ENCODE measurements at regions of chr6 and their contacts with region 1.

Region 1: GRCh38 chr6:28683944-28684538 is 158.4 kb downstream of the GPX5 start:
- DNase-seq: peak; percentile 62 to 81 (median 66)
- ATAC-seq: peak; percentile 86
- H3K4me3 ChIP-seq: no peak overlapping the region
- H3K27ac ChIP-seq: no peak overlapping the region
- H3K4me1 ChIP-seq: peaks cover 0 to 44% of the 10 kb centered on the region in 2 experiments
- H3K27me3 ChIP-seq: no peaks in the 10 kb centered on the region
- CTCF ChIP-seq: peak; percentile 73 to 86 (median 81)
- EP300 ChIP-seq: no peak
- POLR2A ChIP-seq: no peak
- RAD21 ChIP-seq: peak; percentile 96 to 97

Region 2: DNA sequence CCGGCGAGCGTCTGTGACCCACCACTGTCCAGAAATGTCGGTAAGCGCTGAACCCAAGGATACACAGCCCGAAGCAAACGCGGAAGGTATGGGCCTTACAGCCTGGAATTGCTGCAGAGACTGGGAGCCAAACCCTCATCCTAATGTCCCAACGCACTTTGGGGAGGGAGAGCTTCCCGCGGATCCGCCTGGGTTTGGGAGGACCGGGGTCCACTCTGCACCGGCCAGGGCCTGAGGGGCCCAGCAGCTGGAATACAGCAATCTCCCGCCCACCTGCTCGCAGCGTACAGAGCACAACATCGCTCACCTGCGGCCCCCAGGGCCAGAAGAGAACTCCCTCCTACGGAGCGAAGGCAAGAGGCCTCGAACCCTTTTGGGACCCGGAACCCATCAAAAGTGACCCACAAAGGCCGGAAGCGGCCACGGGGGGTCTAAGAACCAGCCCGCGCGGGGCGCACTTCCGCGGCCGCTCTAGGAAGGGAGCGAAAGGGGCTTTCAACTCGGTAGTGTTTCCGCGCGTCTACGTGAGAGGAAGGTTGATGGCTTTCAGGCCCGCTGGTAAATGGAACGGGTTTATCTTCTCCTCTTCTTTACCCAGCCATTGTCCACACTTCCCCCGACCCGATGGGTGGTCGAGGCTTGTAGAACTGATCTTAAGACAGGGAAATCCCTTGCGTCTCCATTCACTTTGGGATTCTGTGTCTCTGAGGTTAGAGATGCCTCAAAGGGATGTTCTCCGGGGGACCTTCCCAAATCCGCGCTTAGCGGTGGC is 284.5 kb before region 1 on chr6 and contains the start of gene ZSCAN12:
- CTCF ChIA-PET with region 1: no interaction called
- POLR2A ChIA-PET with region 1: no interaction called
- in situ Hi-C with region 1: no loop called
- intact Hi-C with region 1: loop called (anchors 2 kb)
- DNase-seq: peak; percentile 90 to 99 (median 91)
- ATAC-seq: peak; percentile 88
- H3K4me3 ChIP-seq: peak within 1 kb of the TSS; percentile 61
- H3K27ac ChIP-seq: peak within 1 kb of the TSS; percentile 80
- H3K4me1 ChIP-seq: peaks cover 21 to 36% of the 10 kb centered on the region in 2 experiments
- H3K27me3 ChIP-seq: no peaks in the 10 kb centered on the region
- CTCF ChIP-seq: peak; percentile 74 to 82 (median 79)
- EP300 ChIP-seq: peak; percentile 74
- POLR2A ChIP-seq: peak; percentile 97
- RAD21 ChIP-seq: peak; percentile 37 to 47
- polyA plus RNA-seq, gene ZSCAN12: 2.5 to 7.9 TPM

Region 3: DNA sequence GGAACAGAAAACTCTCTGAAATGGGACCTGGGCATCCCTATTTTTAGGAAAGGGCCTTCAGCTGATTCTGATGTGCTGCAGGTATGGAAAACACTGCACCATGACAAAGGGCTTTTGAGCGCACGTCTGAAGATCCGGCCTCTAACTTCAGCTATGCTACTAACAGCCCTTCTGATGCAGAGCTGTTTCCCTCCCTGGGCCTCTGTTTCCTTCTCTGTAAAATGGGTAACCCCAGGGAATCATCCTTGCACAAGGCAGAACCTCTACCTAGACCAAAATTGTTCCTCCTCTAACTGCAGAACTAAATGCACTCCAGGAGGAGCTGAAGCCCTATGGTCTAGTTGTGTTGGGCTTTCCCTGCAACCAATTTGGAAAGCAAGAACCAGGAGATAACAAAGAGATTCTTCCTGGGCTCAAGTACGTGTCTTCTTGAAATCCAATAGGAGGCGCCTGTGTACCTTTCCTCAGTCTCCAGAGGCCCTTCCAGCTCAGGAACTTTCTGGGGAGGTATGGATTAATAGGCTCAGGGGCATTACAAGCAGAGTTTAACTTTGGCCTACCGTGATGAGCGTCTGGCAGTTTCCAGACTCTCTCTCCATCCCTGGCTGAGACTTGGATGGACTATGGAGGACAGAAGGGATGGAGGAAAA is 152.4 kb before region 1 on chr6:
- CTCF ChIA-PET with region 1: no interaction called
- POLR2A ChIA-PET with region 1: no interaction called
- in situ Hi-C with region 1: loop called (anchors 5 kb)
- intact Hi-C with region 1: loop called (anchors 1 kb)
- DNase-seq: peak in 2 of 4 experiments; percentile 58 to 67
- ATAC-seq: peak; percentile 84
- H3K4me3 ChIP-seq: no peak overlapping the region
- H3K27ac ChIP-seq: no peak overlapping the region
- H3K4me1 ChIP-seq: peaks cover 4 to 14% of the 10 kb centered on the region in 2 experiments; a peak in 4 of 5 replicates
- H3K27me3 ChIP-seq: no peaks in the 10 kb centered on the region
- CTCF ChIP-seq: peak; percentile 60 to 80 (median 75)
- EP300 ChIP-seq: no peak
- POLR2A ChIP-seq: no peak
- RAD21 ChIP-seq: peak; percentile 76 to 91

Region 4: DNA sequence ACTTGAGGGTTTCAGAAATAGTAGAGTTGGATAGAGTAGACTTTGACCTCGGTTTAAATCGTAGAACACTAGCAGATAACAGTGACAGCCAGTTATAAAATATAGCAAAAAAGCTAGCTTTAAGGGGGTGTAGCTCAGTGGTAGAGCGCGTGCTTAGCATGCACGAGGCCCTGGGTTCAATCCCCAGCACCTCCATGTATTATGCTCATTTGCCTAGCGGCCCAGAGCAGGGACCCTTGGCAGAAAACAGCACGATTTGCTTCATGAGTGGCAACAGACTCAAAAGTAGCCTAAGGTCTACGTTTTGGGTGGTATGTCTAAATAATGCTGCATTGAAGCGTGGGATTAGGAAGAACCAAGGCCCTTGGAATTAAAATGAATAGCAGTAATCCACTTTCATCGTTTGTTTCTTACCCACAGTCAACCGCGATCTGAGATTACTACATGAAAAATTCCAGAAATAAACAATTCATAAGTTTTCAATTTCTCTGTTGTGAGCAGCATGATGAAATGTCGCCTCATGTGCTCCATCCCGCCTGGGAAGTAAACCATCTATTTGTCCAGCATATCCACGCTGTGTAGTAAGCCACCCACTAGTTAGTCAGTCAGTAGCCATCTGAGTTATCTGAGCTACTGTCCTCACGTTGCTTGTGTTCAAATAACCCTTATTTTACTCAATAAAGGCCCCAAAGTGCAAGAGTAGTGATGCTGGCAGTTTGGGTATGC is 26.6 kb after region 1 on chr6:
- CTCF ChIA-PET with region 1: no interaction called
- POLR2A ChIA-PET with region 1: no interaction called
- in situ Hi-C with region 1: no loop called
- intact Hi-C with region 1: loop called (anchors 2 kb)
- DNase-seq: peak; percentile 55 to 97 (median 68)
- ATAC-seq: peak; percentile 87
- H3K4me3 ChIP-seq: peak overlapping the region; percentile 51
- H3K27ac ChIP-seq: peak overlapping the region; percentile 89
- H3K4me1 ChIP-seq: peaks cover 0 to 16% of the 10 kb centered on the region in 2 experiments; a peak in 3 of 5 replicates
- H3K27me3 ChIP-seq: no peaks in the 10 kb centered on the region
- CTCF ChIP-seq: 0 out of 6 replicates have a peak, but pooled peaks of 1 of the 3 experiments have one; percentile 1
- EP300 ChIP-seq: peak; percentile 59
- POLR2A ChIP-seq: no peak
- RAD21 ChIP-seq: peak in 1 of 2 experiments; percentile 27; a peak in 1 of 4 replicates

Region 5: DNA sequence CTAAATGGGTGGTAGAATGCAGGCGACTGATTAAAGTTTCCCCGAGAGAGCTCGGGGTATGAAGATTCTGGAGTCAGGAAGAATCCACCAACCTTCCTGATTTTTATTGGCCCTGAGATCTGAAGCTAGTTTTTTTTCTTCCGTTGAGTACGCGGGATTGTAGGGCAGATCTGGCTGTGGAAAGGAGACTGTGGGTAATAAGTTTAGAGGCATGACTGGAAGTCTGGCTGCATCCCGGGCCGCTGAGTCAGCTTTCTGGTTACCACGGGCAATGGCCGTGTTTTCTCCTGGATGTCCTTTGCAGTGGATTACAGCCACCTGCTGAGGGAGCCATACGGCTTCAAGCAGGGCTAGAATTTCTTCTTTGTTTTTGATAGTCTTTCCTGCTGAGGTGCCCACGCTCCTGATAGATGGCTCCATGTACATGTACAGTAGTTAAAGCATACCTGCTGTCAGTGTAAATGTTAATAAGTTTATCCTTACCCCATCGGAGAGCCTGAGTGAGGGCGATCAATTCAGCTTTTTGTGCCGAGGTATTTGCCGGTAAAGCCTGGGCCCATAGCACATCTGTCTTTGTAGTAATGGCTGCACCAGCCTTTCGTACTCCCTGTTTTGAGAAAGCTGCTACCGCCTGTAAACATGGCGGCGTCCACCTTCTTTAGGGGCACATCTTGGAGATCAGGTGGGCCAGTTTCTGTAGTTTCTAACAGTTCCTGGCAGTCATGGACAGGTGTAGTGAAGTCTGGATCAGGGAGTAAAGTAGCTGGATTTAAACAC is 85.8 kb after region 1 on chr6:
- CTCF ChIA-PET with region 1: interaction called, 5 read pairs
- POLR2A ChIA-PET with region 1: no interaction called
- in situ Hi-C with region 1: no loop called
- intact Hi-C with region 1: loop called (anchors 2 kb)
- DNase-seq: peak; percentile 60 to 87 (median 66)
- ATAC-seq: peak; percentile 82
- H3K4me3 ChIP-seq: no peak overlapping the region
- H3K27ac ChIP-seq: no peak overlapping the region
- H3K4me1 ChIP-seq: peaks cover 24 to 32% of the 10 kb centered on the region in 2 experiments; a peak in 4 of 5 replicates
- H3K27me3 ChIP-seq: no peaks in the 10 kb centered on the region
- CTCF ChIP-seq: peak; percentile 72 to 80 (median 78)
- EP300 ChIP-seq: no peak
- POLR2A ChIP-seq: no peak
- RAD21 ChIP-seq: peak; percentile 88 to 92

Region 6: DNA sequence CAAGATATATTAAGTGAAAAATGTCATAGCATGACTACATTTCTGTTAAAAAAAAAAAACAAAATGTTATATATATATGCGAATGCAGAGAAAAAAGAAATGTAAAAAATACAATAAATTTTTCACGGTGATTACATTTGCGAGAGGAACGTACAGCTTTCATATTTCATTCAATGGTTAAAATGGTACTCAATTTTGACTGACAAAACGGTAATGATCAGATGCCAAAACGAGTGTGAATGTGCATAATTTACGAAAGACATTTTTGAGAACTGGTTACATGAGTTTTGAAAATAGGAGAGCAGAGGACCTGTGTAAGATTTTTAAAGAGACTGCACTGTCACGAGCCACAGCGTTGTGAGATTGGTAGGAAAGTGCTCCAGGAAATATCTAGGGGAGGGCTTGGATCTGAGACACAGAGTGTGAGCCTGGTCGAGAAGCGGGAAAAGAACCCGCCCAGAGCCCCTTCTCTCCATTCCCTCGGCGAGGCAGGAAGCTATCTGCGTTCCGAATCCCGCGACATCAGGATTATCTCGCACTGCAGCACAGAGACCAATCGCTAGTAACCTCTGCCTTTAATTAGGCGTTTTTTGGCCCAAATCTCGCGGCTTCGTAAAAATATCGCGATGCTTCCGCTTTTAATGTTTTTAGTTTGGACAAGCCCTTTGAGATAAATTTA is 211.2 kb after region 1 on chr6:
- CTCF ChIA-PET with region 1: no interaction called
- POLR2A ChIA-PET with region 1: no interaction called
- in situ Hi-C with region 1: no loop called
- intact Hi-C with region 1: loop called (anchors 1 kb)
- DNase-seq: peak; percentile 79 to 99 (median 88)
- ATAC-seq: peak; percentile 84
- H3K4me3 ChIP-seq: peak overlapping the region; percentile 49
- H3K27ac ChIP-seq: peak overlapping the region; percentile 98
- H3K4me1 ChIP-seq: peaks cover 14 to 15% of the 10 kb centered on the region in 2 experiments; a peak in 4 of 5 replicates
- H3K27me3 ChIP-seq: no peaks in the 10 kb centered on the region
- CTCF ChIP-seq: no peak
- EP300 ChIP-seq: no peak
- POLR2A ChIP-seq: peak; percentile 96
- RAD21 ChIP-seq: no peak

Region 7: GRCh38 chr6:29016559-29017427 is 332.8 kb after region 1 on chr6:
- CTCF ChIA-PET with region 1: interaction called, 3 read pairs
- POLR2A ChIA-PET with region 1: no interaction called
- in situ Hi-C with region 1: no loop called
- intact Hi-C with region 1: loop called (anchors 2 kb)
- DNase-seq: peak; percentile 73 to 96 (median 78)
- ATAC-seq: peak; percentile 96
- H3K4me3 ChIP-seq: peak overlapping the region; percentile 56
- H3K27ac ChIP-seq: peak overlapping the region; percentile 69
- H3K4me1 ChIP-seq: peaks cover 3 to 7% of the 10 kb centered on the region in 2 experiments; a peak in 3 of 5 replicates
- H3K27me3 ChIP-seq: no peaks in the 10 kb centered on the region
- CTCF ChIP-seq: peak; percentile 90 to 93 (median 93)
- EP300 ChIP-seq: no peak
- POLR2A ChIP-seq: no peak
- RAD21 ChIP-seq: peak; percentile 88 to 93

Measured in K562 (cell line).